ENCODE measurements at regions of chr19 and their contacts with region 1.

Region 1: DNA sequence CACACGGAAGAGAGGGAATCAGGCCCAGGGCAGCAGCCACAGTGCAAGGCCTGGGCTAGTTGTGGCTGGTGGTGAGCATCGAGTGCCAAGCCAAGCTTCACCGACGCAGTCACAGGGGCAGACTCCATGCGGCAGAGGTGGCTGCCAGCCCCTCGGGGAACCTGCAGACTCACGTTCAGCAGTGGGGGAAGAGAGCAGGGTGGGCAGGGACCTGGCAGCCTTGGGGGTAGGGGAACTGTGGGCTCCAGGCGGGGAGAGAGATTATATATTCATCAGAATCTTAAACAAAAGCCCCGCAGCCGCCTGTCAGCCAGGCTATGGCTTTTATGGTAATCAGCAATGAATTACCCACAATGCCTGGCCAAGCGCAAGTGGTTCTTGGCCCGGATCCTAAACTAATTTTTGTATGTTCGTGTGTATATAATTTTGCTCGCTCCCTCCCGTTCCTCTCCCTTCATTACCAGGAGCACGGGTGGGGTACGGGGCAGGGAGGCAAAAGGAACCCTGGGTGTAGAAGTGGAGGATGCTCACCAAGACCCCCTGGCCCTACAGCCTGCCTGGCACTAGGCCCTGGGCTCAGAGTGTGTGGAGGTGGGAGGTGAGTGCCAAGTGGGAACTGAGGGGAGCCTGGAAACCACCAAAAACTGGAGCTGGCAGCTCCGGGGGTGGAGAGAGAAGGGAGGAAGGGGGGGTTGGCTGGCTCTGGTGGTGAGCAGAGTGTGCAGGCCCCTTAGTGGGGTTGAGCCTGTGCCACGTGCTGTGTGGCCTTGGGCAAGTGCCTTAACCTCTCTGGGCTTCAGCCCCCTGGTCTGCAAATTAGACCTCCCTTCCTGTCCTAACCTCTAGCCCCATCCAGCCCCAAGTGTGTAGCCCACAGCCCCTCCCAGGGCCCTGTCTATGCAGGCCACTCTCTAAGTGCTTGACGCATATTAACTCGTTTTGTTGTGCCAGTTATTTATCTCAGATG is 31.9 kb downstream of the PTPRS start:
- DNase-seq: peak; percentile 79
- ATAC-seq: peak; percentile 83
- H3K4me3 ChIP-seq: no peak overlapping the region
- H3K27ac ChIP-seq: peak overlapping the region; percentile 45; the same call in 1 of the 2 replicates
- H3K4me1 ChIP-seq: peaks cover 0 to 12% of the 10 kb centered on the region in 2 experiments; a peak in 3 of 4 replicates
- H3K27me3 ChIP-seq: no peaks in the 10 kb centered on the region
- CTCF ChIP-seq: no peak
- POLR2A ChIP-seq: peak; percentile 24
- RAD21 ChIP-seq: no peak

Region 2: GRCh38 chr19:4694209-4694987 is 614.4 kb before region 1 on chr19:
- CTCF ChIA-PET with region 1: no interaction called
- POLR2A ChIA-PET with region 1: no interaction called
- RAD21 ChIA-PET with region 1: no interaction called
- intact Hi-C with region 1: no loop called
- DNase-seq: peak; percentile 93
- ATAC-seq: peak; percentile 91
- H3K4me3 ChIP-seq: peak overlapping the region; percentile 38 to 46
- H3K27ac ChIP-seq: peak overlapping the region; percentile 75
- H3K4me1 ChIP-seq: peaks cover 8 to 19% of the 10 kb centered on the region in 2 experiments
- H3K27me3 ChIP-seq: no peaks in the 10 kb centered on the region
- CTCF ChIP-seq: no peak
- POLR2A ChIP-seq: no peak
- RAD21 ChIP-seq: no peak

Region 3: GRCh38 chr19:5205381-5205780 is 103.4 kb before region 1 on chr19:
- CTCF ChIA-PET with region 1: no interaction called
- POLR2A ChIA-PET with region 1: no interaction called
- RAD21 ChIA-PET with region 1: no interaction called
- intact Hi-C with region 1: no loop called
- DNase-seq: no peak
- ATAC-seq: no peak
- H3K4me3 ChIP-seq: no peak overlapping the region
- H3K27ac ChIP-seq: no peak overlapping the region
- H3K4me1 ChIP-seq: no peaks in the 10 kb centered on the region
- H3K27me3 ChIP-seq: no peaks in the 10 kb centered on the region
- CTCF ChIP-seq: no peak
- POLR2A ChIP-seq: no peak
- RAD21 ChIP-seq: no peak

Region 4: GRCh38 chr19:5292822-5293611 is 15.7 kb before region 1 on chr19:
- CTCF ChIA-PET with region 1: interaction called, 5 read pairs
- POLR2A ChIA-PET with region 1: interaction called, 18 read pairs
- RAD21 ChIA-PET with region 1: no interaction called
- intact Hi-C with region 1: no loop called
- DNase-seq: no peak
- ATAC-seq: peak; percentile 89
- H3K4me3 ChIP-seq: peak overlapping the region; percentile 57 to 69
- H3K27ac ChIP-seq: peak overlapping the region; percentile 81; the same call in 1 of the 2 replicates
- H3K4me1 ChIP-seq: peaks cover 3 to 16% of the 10 kb centered on the region in 2 experiments; a peak in 3 of 4 replicates
- H3K27me3 ChIP-seq: no peaks in the 10 kb centered on the region
- CTCF ChIP-seq: no peak
- POLR2A ChIP-seq: peak; percentile 39
- RAD21 ChIP-seq: no peak

Measured in HCT116 (cell line).